Transverse colon (tissue), 4 donors: ENCODE measurements at regions of chr19 and their contacts with region 1.

Region 1: DNA sequence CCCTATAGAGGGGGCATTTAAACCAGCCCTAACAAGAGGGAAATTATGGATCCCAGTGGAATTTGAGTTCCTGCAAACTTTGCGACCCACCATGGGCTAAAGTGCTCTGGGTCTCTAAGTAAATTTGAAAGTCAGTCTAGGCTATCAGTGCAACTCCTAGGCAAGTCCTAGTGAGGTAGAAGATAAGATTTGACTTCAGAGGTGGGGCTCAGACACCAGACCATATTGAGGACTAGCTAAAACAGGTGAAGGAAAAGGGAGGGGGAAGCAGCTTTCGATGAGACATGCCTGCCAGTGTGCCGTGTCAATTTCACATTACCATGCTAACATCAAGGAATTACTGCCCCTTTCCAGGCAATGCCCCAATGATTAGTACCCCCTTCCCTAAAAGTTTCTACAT is 38.4 kb downstream of the CD320 start:
- DNase-seq: no peak
- H3K4me3 ChIP-seq: no peak overlapping the region
- H3K27ac ChIP-seq: peak overlapping the region; percentile 57 to 74 (median 59)
- H3K4me1 ChIP-seq: peaks cover 0 to 11% (median 3%) of the 10 kb centered on the region in 4 donors
- H3K27me3 ChIP-seq: peaks cover 12% of the 10 kb centered on the region
- CTCF ChIP-seq: no peak
- EP300 ChIP-seq: no peak
- POLR2A ChIP-seq: no peak

Region 2: DNA sequence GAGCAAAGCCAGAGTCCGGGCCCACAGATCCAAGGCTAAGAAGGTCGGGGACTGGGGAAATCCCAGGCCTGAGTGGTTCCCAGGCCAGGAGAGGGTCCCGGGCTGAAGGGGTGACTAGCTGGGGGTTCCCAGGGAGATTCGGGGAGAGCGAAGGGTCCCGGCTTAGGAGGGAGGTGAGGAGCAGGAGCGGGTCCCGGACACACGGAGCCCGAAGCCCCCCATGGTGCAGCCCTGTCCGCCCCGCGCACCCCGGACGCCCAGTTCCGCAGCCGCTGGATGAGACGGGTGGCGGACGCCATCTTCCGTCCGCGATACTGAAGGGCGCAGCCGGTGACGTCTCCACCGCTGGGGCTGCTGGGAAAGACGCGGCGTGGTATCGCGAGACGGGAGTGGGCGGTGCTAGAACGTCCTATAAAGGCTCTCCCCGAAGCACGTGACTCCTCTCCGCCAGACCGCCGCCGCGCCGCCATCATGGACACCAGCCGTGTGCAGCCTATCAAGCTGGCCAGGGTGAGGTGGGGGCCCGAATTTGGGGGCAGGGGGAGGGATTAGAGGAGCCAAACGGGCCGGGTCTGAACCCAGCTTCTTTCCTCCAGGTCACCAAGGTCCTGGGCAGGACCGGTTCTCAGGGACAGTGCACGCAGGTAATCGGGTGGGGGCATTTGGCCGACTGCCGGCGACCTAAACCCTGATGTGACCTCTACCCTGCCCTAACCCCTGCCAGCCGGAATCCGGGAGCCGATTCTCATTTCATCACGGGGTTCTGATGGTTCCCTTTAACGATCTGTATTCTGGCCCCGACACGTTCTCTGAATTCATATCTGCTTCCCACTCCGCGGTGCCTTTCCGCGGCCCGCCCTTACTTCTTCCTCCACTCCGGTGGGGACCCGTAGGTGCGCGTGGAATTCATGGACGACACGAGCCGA is 51.6 kb after region 1 on chr19 and contains the starts of genes NDUFA7 and RPS28:
- in situ Hi-C with region 1: loop called in 1 of 4 experiments (anchors 5 kb)
- intact Hi-C with region 1: no loop called
- DNase-seq: peak; percentile 98
- H3K4me3 ChIP-seq: peak within 1 kb of the TSS; percentile 76 to 99 (median 87)
- H3K27ac ChIP-seq: peak within 1 kb of the TSS; percentile 90 to 96 (median 94)
- H3K4me1 ChIP-seq: peaks cover 20 to 29% (median 24%) of the 10 kb centered on the region in 4 donors
- H3K27me3 ChIP-seq: no peaks in the 10 kb centered on the region
- CTCF ChIP-seq: peak in 3 of 5 experiments; percentile 17 to 36 (median 32)
- EP300 ChIP-seq: no peak
- POLR2A ChIP-seq: peak; percentile 97
- total RNA-seq, gene NDUFA7: 11.2 to 40.0 (median 18.6) TPM
- total RNA-seq, gene RPS28: 275 to 526 (median 413) TPM